Heart right ventricle (tissue), 16 donors: ENCODE measurements at regions of chr19 and their contacts with region 1.

Region 1: GRCh38 chr19:17703824-17704463 is 15.3 kb upstream of the MAP1S start:
- DNase-seq: peak in 1 of 2 donors; percentile 55
- ATAC-seq: peak; percentile 58 to 85 (median 74)
- H3K4me3 ChIP-seq: no peak overlapping the region
- H3K27ac ChIP-seq: no peak overlapping the region
- H3K4me1 ChIP-seq: peaks cover 0 to 3% (median 0%) of the 10 kb centered on the region in 9 donors
- H3K27me3 ChIP-seq: peaks cover 0 to 39% (median 25%) of the 10 kb centered on the region in 7 donors
- CTCF ChIP-seq: peak; percentile 61 to 95 (median 80)

Region 2: GRCh38 chr19:17766543-17767131 is 62.7 kb after region 1 on chr19:
- intact Hi-C with region 1: loop called in 9 of 10 experiments (anchors 1 to 5 kb)
- DNase-seq: peak; percentile 70 to 81
- ATAC-seq: peak; percentile 72 to 93 (median 82)
- H3K4me3 ChIP-seq: peak overlapping the region in 5 of 10 donors; percentile 6 to 29 (median 27)
- H3K27ac ChIP-seq: peak overlapping the region in 1 of 10 donors; percentile 36
- H3K4me1 ChIP-seq: peaks cover 0 to 13% (median 6%) of the 10 kb centered on the region in 9 donors
- H3K27me3 ChIP-seq: peaks cover 0 to 10% (median 0%) of the 10 kb centered on the region in 7 donors
- CTCF ChIP-seq: peak; percentile 63 to 88 (median 80)

Region 3: DNA sequence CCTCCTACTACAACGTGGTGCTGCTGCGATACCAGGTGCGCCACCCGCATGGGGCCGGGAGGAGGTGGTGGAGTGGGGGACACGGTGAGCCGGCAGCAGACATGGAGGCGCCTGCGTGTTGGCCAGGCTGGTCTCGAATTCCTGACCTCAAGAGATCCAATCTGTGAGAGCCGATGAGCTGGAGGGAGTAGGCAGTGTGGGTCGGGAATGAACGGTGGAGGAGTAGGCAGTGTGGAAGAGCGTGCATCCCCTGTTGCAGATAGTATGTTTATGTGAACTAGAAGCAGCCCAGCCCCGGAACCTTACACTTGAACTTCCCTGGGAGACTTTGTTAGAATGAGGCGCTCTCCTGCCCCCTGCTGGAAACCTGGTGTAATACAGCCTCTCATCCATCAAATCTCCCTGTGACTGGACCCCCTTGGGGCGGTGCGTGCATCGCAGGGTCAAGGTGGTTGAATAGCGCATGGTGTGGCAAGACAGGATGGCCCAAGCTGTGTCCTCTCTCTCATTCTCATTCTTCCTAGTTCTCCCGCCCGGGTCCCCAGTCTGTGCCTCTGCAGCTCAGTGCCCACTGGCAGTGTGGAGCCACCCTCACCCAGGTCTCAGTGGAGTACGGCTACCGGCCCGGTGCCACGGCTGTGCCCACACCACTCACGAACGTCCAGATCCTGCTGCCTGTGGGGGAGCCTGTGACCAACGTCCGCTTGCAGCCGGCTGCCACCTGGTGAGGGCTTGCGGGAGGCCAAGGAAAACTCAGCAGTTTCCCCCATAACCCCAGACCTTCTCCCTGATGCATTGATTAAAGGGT is 80.5 kb after region 1 on chr19:
- intact Hi-C with region 1: loop called in 1 of 10 experiments (anchors 5 kb)
- DNase-seq: peak; percentile 41 to 56
- ATAC-seq: peak in 6 of 8 donors; percentile 38 to 60 (median 48)
- H3K4me3 ChIP-seq: no peak overlapping the region
- H3K27ac ChIP-seq: no peak overlapping the region
- H3K4me1 ChIP-seq: peaks cover 0 to 3% (median 0%) of the 10 kb centered on the region in 9 donors
- H3K27me3 ChIP-seq: peaks cover 0 to 30% (median 25%) of the 10 kb centered on the region in 7 donors
- CTCF ChIP-seq: peak; percentile 63 to 84 (median 78)

Region 4: DNA sequence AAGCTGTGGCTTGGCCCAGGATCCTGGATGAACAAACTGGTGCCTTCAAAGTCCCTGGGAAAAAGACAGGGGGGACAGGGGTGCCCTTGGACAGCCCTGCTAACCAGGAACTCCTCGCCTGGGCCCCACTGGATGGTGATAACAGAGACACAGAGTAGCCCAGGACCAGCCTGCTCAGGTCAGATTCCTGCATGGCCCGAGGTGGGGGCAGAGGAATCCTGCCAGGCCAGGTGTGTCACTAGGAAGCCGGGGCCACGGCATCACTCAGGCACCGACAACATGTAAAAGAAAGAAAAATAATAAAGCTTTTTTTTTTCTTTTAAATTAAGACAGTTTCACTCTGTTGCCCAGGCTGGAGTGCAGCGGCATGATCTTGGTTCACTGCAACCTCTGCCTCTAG is 150.1 kb after region 1 on chr19:
- intact Hi-C with region 1: loop called in 8 of 10 experiments (anchors 5 to 10 kb)
- DNase-seq: no peak
- ATAC-seq: no peak
- H3K4me3 ChIP-seq: no peak overlapping the region
- H3K27ac ChIP-seq: no peak overlapping the region
- H3K4me1 ChIP-seq: peaks cover 0 to 33% (median 0%) of the 10 kb centered on the region in 9 donors
- H3K27me3 ChIP-seq: peaks cover 0 to 11% (median 0%) of the 10 kb centered on the region in 7 donors
- CTCF ChIP-seq: no peak